ENCODE measurements at regions of chr13 and their contacts with region 1.

Region 1: GRCh38 chr13:28324181-28324789 is 170.6 kb downstream of the FLT1 start:
- DNase-seq: peak; percentile 78

Region 2: GRCh38 chr13:28449826-28450773 is 125.8 kb after region 1 on chr13:
- intact Hi-C with region 1: loop called (anchors 10 kb)
- DNase-seq: no peak

Region 3: GRCh38 chr13:28636674-28637317 is 312.5 kb after region 1 on chr13:
- intact Hi-C with region 1: loop called (anchors 1 kb)
- DNase-seq: no peak

Region 4: DNA sequence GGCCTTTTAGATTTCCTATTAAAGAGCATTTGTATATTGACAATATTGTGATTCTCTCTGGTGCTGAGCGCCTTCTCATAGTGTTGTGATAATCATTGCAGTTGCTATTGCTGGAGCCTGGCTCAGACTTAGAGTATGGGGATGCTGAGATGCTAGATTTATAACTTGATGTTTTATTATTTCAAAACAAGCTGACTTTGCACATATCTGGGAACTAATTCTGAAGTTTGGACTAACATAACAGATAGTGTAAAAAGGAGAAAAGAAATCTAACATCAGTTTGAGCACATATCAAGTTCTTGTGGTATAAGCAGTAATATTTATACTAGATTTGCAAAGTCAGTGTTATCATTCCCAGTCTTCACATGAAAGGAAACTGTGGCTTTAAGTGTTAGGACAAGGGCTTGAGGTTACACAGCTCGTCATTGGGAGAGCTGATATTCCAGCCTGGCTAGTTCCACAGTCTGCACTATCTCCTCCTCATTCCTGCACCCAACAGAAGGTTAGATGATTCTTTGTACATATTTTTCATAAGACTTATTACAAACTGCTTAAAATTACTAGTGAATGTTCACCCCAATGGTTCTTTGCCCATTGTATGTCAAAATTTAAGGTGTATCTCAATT is 775.6 kb after region 1 on chr13:
- intact Hi-C with region 1: no loop called
- DNase-seq: no peak

Measured in cardiac septum (tissue), 1 donor.